ENCODE measurements at regions of chr18 and their contacts with region 1.

Region 1: DNA sequence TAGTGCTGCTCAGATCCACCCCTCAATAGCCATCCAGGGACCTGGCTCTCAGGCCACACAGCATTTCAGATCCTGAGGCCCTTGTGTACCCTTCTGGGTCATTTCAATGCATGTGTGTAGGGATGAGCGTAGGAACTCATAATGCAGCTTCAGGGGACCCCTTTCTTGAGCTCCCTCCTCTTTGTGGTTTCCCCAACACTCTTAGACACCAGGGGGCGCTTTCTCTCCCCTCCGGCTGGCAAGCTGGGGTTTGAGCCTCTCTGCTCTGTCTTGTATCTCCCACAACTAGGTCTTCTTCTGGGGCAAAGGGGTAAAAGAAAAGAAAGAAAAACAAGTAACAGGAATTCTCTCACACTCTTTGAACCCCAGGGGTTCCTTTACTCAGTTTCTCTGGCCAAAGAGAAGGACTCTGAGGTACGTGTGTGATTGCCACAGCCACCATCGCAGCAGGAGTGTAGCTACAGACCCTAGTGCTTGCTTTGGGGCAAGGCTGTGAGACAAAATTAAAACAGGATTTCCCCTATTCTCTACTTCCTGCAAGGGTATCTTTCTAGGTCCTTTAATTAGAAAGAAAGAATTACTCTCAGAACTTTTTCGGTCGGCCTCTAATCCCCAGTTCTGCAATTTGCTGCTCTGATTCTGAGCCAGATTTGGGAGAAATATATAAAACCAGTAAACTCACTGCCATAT is 38.0 kb downstream of the CABYR start:
- DNase-seq: peak; percentile 43
- H3K4me3 ChIP-seq: no peak overlapping the region
- H3K27ac ChIP-seq: no peak overlapping the region
- H3K4me1 ChIP-seq: no peaks in the 10 kb centered on the region
- H3K27me3 ChIP-seq: no peaks in the 10 kb centered on the region
- CTCF ChIP-seq: peak; percentile 72 to 86
- POLR2A ChIP-seq: no peak

Region 2: GRCh38 chr18:23650968-23651927 is 525.6 kb before region 1 on chr18:
- CTCF ChIA-PET with region 1: no interaction called
- POLR2A ChIA-PET with region 1: no interaction called
- dilution Hi-C with region 1: no loop called
- intact Hi-C with region 1: no loop called
- DNase-seq: peak; percentile 51
- H3K4me3 ChIP-seq: no peak overlapping the region
- H3K27ac ChIP-seq: no peak overlapping the region
- H3K4me1 ChIP-seq: peaks cover 10% of the 10 kb centered on the region
- H3K27me3 ChIP-seq: peaks cover 0 to 4% of the 10 kb centered on the region in 2 experiments
- CTCF ChIP-seq: no peak
- POLR2A ChIP-seq: no peak

Region 3: GRCh38 chr18:24189007-24189528 is 12.2 kb after region 1 on chr18:
- CTCF ChIA-PET with region 1: interaction called, 53 read pairs
- POLR2A ChIA-PET with region 1: no interaction called
- dilution Hi-C with region 1: no loop called
- intact Hi-C with region 1: no loop called
- DNase-seq: no peak
- H3K4me3 ChIP-seq: no peak overlapping the region
- H3K27ac ChIP-seq: no peak overlapping the region
- H3K4me1 ChIP-seq: no peaks in the 10 kb centered on the region
- H3K27me3 ChIP-seq: no peaks in the 10 kb centered on the region
- CTCF ChIP-seq: no peak
- POLR2A ChIP-seq: no peak

Region 4: DNA sequence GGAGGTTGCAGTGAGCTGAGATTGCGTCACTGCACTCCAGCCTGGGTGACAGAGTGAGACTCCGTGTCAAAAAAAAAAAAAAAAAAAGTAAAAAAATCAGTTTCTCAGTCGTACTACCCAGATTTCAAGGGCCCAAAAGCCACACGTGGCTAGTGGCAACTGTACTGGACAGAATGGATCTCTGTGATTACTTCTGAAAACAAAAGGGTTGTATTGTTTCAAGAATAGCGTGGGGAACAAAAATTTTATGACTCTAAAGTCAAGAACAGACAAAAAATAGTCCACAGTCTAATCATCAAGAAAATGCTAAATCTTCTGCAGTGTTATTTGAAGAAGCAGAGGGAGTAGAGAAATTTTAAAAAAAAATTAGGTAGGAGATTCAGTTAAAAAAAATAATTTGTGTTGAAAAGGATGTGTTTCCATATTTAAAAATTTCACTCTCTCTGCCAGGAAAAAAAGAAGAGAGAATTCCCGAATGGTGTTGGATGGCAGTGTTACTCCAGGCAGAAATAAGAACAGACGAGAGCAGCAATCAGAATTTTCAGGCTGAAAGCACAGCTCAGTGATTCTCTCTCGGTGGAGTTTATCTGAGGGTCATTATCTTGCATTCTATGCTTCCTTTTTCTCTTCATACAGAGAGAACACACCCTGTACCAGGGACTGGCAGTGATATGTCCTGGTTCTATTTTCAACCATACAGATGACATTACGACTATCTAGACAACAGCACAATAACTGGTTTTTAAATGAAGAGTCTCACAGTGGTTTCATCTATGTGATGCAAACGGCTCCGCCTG is 23.8 kb after region 1 on chr18:
- CTCF ChIA-PET with region 1: interaction called, 12 read pairs
- POLR2A ChIA-PET with region 1: no interaction called
- dilution Hi-C with region 1: no loop called
- intact Hi-C with region 1: no loop called
- DNase-seq: no peak
- H3K4me3 ChIP-seq: no peak overlapping the region
- H3K27ac ChIP-seq: no peak overlapping the region
- H3K4me1 ChIP-seq: no peaks in the 10 kb centered on the region
- H3K27me3 ChIP-seq: no peaks in the 10 kb centered on the region
- CTCF ChIP-seq: no peak
- POLR2A ChIP-seq: no peak

Region 5: GRCh38 chr18:24212939-24213338 is 36.1 kb after region 1 on chr18:
- CTCF ChIA-PET with region 1: interaction called, 13 read pairs
- POLR2A ChIA-PET with region 1: interaction called, 3 read pairs
- dilution Hi-C with region 1: no loop called
- intact Hi-C with region 1: no loop called
- DNase-seq: peak; percentile 55
- H3K4me3 ChIP-seq: no peak overlapping the region
- H3K27ac ChIP-seq: peak overlapping the region; percentile 18
- H3K4me1 ChIP-seq: peaks cover 12% of the 10 kb centered on the region
- H3K27me3 ChIP-seq: no peaks in the 10 kb centered on the region
- CTCF ChIP-seq: no peak
- POLR2A ChIP-seq: no peak

Region 6: DNA sequence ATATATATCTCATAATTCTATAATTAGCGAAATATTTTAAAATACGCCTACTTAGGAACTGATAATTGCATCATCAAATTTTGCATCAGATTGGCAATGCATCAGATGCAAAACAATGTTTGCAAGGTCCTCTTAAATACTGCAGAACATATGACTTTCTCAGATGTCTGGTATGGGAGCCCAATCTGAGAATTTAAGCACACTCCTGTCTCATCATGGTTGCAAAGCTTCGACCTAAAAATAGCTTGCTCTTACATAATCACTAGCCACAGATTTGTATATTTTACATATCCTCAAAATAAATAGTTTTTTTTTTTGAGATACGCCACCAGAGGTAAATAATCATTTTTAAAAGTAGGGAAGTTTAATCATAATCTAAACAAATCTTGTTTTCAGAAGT is 85.2 kb after region 1 on chr18:
- CTCF ChIA-PET with region 1: interaction called, 19 read pairs
- POLR2A ChIA-PET with region 1: no interaction called
- dilution Hi-C with region 1: no loop called
- intact Hi-C with region 1: no loop called
- DNase-seq: no peak
- H3K4me3 ChIP-seq: no peak overlapping the region
- H3K27ac ChIP-seq: no peak overlapping the region
- H3K4me1 ChIP-seq: no peaks in the 10 kb centered on the region
- H3K27me3 ChIP-seq: no peaks in the 10 kb centered on the region
- CTCF ChIP-seq: no peak
- POLR2A ChIP-seq: no peak

Region 7: DNA sequence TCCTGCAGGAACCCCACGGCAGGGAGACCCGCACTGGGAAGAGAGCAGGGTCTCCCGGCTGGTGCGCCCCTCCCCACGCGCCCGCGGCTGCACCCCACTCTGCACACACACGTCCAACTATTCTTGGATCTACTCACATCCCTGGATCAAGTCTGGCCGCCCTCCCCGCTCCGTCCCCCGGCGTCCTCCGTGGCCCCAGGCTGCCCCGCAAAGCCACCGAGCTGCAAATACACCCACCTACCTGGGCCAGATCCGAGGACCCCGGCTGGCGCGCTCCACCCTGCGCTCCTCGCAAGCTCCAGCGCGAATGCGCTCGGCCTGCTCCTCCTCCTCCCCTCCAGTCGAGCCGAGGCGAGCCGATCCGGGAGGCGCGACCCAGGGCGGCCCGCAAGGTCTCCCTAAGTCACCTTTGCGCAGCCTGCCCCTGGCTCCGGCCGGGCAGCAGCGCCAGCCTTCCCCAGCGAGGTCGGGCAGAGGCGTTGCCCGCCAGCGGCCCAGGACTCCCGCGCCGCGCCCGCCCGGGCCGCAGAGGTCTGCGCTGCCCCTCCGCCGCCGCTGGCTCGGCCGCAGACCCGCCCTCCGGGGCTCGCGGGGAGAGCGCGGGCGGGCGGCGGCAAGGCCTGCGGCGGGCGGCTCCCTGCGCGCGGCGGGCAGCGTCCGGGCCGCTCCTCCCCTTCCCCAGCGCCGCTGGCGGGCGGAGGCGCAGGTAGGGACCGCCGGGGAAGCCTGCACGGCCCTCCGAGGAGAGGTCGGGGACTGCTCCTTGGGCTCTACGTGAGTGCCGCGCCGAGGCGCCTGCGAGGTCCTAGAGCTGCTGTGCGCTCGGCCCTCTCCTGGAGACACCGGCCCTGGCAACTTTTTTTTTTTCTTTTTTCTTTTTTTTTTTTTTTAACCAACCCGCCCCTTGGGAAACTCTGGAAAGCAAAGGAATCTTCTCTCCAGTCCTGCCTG is 94.8 kb after region 1 on chr18:
- CTCF ChIA-PET with region 1: interaction called, 56 read pairs
- POLR2A ChIA-PET with region 1: no interaction called
- dilution Hi-C with region 1: no loop called
- intact Hi-C with region 1: loop called (anchors 1 kb)
- DNase-seq: peak; percentile 78
- H3K4me3 ChIP-seq: peak overlapping the region; percentile 43 to 58 (median 49)
- H3K27ac ChIP-seq: no peak overlapping the region
- H3K4me1 ChIP-seq: peaks cover 6% of the 10 kb centered on the region
- H3K27me3 ChIP-seq: no peaks in the 10 kb centered on the region
- CTCF ChIP-seq: no peak
- POLR2A ChIP-seq: no peak

Region 8: GRCh38 chr18:24413148-24413547 is 236.3 kb after region 1 on chr18:
- CTCF ChIA-PET with region 1: interaction called, 24 read pairs
- POLR2A ChIA-PET with region 1: no interaction called
- dilution Hi-C with region 1: no loop called
- intact Hi-C with region 1: no loop called
- DNase-seq: no peak
- H3K4me3 ChIP-seq: no peak overlapping the region
- H3K27ac ChIP-seq: no peak overlapping the region
- H3K4me1 ChIP-seq: no peaks in the 10 kb centered on the region
- H3K27me3 ChIP-seq: peaks cover 18 to 22% of the 10 kb centered on the region in 2 experiments
- CTCF ChIP-seq: no peak
- POLR2A ChIP-seq: no peak